ENCODE measurements at regions of chr16 and their contacts with region 1.

Region 1: DNA sequence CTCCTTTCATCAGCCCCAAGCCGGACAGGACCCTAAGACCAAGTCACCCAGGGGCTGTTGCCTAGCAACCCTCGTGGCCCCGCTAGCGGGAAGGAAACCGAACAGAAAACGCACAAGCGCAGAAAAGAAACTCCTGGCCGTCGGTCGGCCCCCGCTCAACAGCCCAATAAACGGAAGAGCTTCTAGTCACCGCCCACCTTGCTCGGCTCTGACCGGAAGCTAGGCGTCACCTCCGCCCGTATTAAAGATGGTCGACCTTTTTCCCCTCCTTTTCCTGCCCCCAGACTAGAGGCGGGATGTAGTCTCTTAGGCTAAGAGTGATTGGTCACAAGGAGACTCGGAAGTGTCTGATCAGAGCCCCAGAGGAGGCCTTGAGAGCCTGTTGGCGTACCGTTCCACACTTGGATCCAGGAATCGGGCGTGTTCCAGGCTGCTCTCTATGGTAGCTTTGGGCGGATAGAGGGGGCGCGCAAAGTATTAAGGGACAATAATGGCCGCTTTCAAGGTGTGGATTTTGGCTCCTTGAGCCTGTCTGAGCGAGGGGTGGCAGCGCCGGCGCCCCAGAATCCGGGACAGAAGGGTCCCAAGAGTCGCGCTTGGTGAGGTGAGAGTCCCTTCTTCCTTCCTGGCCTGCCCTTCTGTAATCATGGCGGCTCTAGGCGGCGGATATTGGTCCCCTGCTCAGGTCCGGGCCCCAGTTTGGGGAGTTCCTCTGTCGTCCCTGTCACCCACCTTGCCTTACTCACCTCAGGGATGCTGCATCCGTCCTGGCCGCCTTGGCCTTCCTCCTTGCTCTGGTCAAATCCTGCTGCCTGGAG is at the starts of genes DHX38 and TXNL4B:
- DNase-seq: peak; percentile 100
- ATAC-seq: peak; percentile 98
- H3K4me3 ChIP-seq: peak within 1 kb of the TSS; percentile 98 to 100 (median 98)
- H3K27ac ChIP-seq: peak within 1 kb of the TSS; percentile 88
- H3K4me1 ChIP-seq: peaks cover 54% of the 10 kb centered on the region
- H3K27me3 ChIP-seq: peaks cover 0 to 4% of the 10 kb centered on the region in 2 experiments; a peak in 1 of 5 replicates
- CTCF ChIP-seq: peak; percentile 15; the same call in 1 of the 2 replicates
- EP300 ChIP-seq: peak in 1 of 2 experiments; percentile 28; a peak in 1 of 4 replicates
- POLR2A ChIP-seq: peak; percentile 69 to 95
- RAD21 ChIP-seq: no peak
- total RNA-seq, gene DHX38: 58.9 and 85.9 TPM in 2 replicates
- total RNA-seq, gene TXNL4B: 18.3 and 24.4 TPM in 2 replicates

Region 2: GRCh38 chr16:71610936-71611871 is 482.5 kb before region 1 on chr16:
- CTCF ChIA-PET with region 1: no interaction called
- POLR2A ChIA-PET with region 1: no interaction called
- in situ Hi-C with region 1: no loop called
- intact Hi-C with region 1: no loop called
- DNase-seq: peak; percentile 72
- ATAC-seq: peak; percentile 96
- H3K4me3 ChIP-seq: peak overlapping the region in 1 of 3 experiments; percentile 23; a peak in 2 of 6 replicates
- H3K27ac ChIP-seq: no peak overlapping the region
- H3K4me1 ChIP-seq: peaks cover 70% of the 10 kb centered on the region
- H3K27me3 ChIP-seq: no peaks in the 10 kb centered on the region
- CTCF ChIP-seq: peak; percentile 100
- EP300 ChIP-seq: no peak
- POLR2A ChIP-seq: no peak
- RAD21 ChIP-seq: peak; percentile 100

Region 3: GRCh38 chr16:71808593-71809459 is 284.8 kb before region 1 on chr16 and contains the start of gene AP1G1:
- CTCF ChIA-PET with region 1: no interaction called
- POLR2A ChIA-PET with region 1: interaction called, 10 read pairs
- in situ Hi-C with region 1: no loop called
- intact Hi-C with region 1: no loop called
- DNase-seq: peak; percentile 98
- ATAC-seq: peak; percentile 94
- H3K4me3 ChIP-seq: peak within 1 kb of the TSS; percentile 96 to 99 (median 98)
- H3K27ac ChIP-seq: peak within 1 kb of the TSS; percentile 98
- H3K4me1 ChIP-seq: peaks cover 48% of the 10 kb centered on the region
- H3K27me3 ChIP-seq: peaks cover 0 to 6% of the 10 kb centered on the region in 2 experiments; a peak in 1 of 5 replicates
- CTCF ChIP-seq: peak; percentile 10; the same call in 1 of the 2 replicates
- EP300 ChIP-seq: peak in 1 of 2 experiments; percentile 31; a peak in 3 of 4 replicates
- POLR2A ChIP-seq: peak; percentile 87 to 88
- RAD21 ChIP-seq: peak; percentile 54; the same call in 1 of the 2 replicates
- total RNA-seq, gene AP1G1: 66.2 and 87.1 TPM in 2 replicates

Region 4: GRCh38 chr16:72008424-72009216 is 85.0 kb before region 1 on chr16 and contains the start of gene DHODH:
- CTCF ChIA-PET with region 1: no interaction called
- POLR2A ChIA-PET with region 1: interaction called, 5 read pairs
- in situ Hi-C with region 1: no loop called
- intact Hi-C with region 1: loop called (anchors 1 kb)
- DNase-seq: peak; percentile 99
- ATAC-seq: peak; percentile 99
- H3K4me3 ChIP-seq: peak within 1 kb of the TSS; percentile 91 to 100 (median 97)
- H3K27ac ChIP-seq: peak within 1 kb of the TSS; percentile 87
- H3K4me1 ChIP-seq: peaks cover 41% of the 10 kb centered on the region
- H3K27me3 ChIP-seq: no peaks in the 10 kb centered on the region; a peak in 1 of 5 replicates
- CTCF ChIP-seq: peak; percentile 48
- EP300 ChIP-seq: no peak
- POLR2A ChIP-seq: peak; percentile 98
- RAD21 ChIP-seq: peak; percentile 42
- total RNA-seq, gene DHODH: 12.7 and 16.4 TPM in 2 replicates

Region 5: GRCh38 chr16:72061564-72061963 is 32.1 kb before region 1 on chr16:
- CTCF ChIA-PET with region 1: interaction called, 58 read pairs
- POLR2A ChIA-PET with region 1: interaction called, 46 read pairs
- in situ Hi-C with region 1: no loop called
- intact Hi-C with region 1: loop called (anchors 1 kb)
- DNase-seq: no peak
- ATAC-seq: no peak
- H3K4me3 ChIP-seq: no peak overlapping the region
- H3K27ac ChIP-seq: peak overlapping the region; percentile 92
- H3K4me1 ChIP-seq: peaks cover 64% of the 10 kb centered on the region
- H3K27me3 ChIP-seq: no peaks in the 10 kb centered on the region
- CTCF ChIP-seq: no peak
- EP300 ChIP-seq: no peak
- POLR2A ChIP-seq: 0 out of 4 replicates have a peak, but pooled peaks of 1 of the 2 experiments have one; percentile 0
- RAD21 ChIP-seq: no peak

Region 6: GRCh38 chr16:72072514-72073342 is 20.9 kb before region 1 on chr16:
- CTCF ChIA-PET with region 1: interaction called, 58 read pairs
- POLR2A ChIA-PET with region 1: interaction called, 51 read pairs
- in situ Hi-C with region 1: no loop called
- intact Hi-C with region 1: no loop called
- DNase-seq: peak; percentile 96
- ATAC-seq: peak; percentile 96
- H3K4me3 ChIP-seq: peak overlapping the region in 1 of 3 experiments; percentile 19; a peak in 1 of 6 replicates
- H3K27ac ChIP-seq: peak overlapping the region; percentile 90
- H3K4me1 ChIP-seq: peaks cover 53% of the 10 kb centered on the region
- H3K27me3 ChIP-seq: no peaks in the 10 kb centered on the region
- CTCF ChIP-seq: no peak
- EP300 ChIP-seq: peak; percentile 25 to 89; a peak in 3 of 4 replicates
- POLR2A ChIP-seq: peak; percentile 53 to 72; a peak in 2 of 4 replicates
- RAD21 ChIP-seq: no peak; the same call in 1 of the 2 replicates